Transverse colon (tissue), 4 donors: ENCODE measurements at regions of chr2 and their contacts with region 1.

Region 1: DNA sequence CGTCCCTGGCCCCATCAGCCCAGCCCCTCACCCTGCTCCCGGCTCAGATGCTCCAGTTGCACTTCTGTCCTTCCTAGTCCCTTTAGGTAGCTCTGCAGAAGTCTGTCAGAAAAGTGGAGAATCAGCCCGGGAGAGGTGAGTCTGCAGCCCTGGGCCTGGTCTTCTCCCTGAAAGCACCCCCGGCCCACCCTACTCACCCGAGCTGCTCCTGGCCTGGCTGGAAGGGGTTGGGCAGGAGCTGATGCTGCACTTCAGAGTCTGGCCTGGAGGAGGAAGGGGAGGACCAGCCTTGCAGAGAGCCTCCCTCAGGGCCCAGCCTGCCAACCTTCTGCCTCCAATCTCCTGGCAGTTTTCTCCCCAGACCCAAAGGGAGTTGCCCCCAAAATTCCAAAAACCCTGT is 15.8 kb downstream of the KHK start:
- DNase-seq: no peak
- H3K4me3 ChIP-seq: no peak overlapping the region
- H3K27ac ChIP-seq: no peak overlapping the region
- H3K4me1 ChIP-seq: no peaks in the 10 kb centered on the region
- H3K27me3 ChIP-seq: peaks cover 5% of the 10 kb centered on the region
- CTCF ChIP-seq: no peak
- EP300 ChIP-seq: no peak
- POLR2A ChIP-seq: no peak

Region 2: GRCh38 chr2:27281855-27282559 is 179.7 kb after region 1 on chr2 and contains the start of gene TRIM54:
- in situ Hi-C with region 1: loop called in 3 of 4 experiments (anchors 5 to 10 kb)
- intact Hi-C with region 1: loop called (anchors 2 kb)
- DNase-seq: no peak
- H3K4me3 ChIP-seq: no peak within 1 kb of the TSS
- H3K27ac ChIP-seq: no peak within 1 kb of the TSS
- H3K4me1 ChIP-seq: no peaks in the 10 kb centered on the region
- H3K27me3 ChIP-seq: peaks cover 45% of the 10 kb centered on the region
- CTCF ChIP-seq: no peak
- EP300 ChIP-seq: no peak
- POLR2A ChIP-seq: no peak
- total RNA-seq, gene TRIM54: 0.40 to 1.9 (median 1.2) TPM in 3 of 4 donors, not detected in the other